IMR-90 (cell line): ENCODE measurements at regions of chr13 and their contacts with region 1.

Region 1: DNA sequence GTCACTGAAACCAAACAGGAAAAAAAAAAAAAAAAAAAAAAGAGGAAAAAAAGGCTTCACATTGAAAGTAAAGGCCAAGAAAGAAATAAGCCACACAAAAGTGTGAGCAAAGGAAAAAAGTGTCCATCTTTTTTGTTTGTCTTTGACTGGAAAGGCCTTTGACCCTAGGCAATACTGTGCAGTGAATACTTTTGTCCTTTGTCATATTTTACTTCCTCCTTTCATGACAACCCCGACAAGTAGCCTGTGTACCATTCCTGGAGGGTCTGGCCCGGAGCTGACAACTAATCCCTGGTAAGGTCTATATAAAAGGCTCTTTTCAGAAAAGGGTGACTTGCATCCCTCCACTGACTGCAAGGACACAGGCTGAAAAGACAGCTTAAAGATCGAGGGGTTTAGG is 12.9 kb upstream of the MICU2 start:
- DNase-seq: no peak
- ATAC-seq: no peak
- H3K4me3 ChIP-seq: no peak overlapping the region
- H3K27ac ChIP-seq: no peak overlapping the region
- H3K4me1 ChIP-seq: peaks cover 3% of the 10 kb centered on the region
- H3K27me3 ChIP-seq: peaks cover 16% of the 10 kb centered on the region
- CTCF ChIP-seq: no peak
- POLR2A ChIP-seq: no peak
- RAD21 ChIP-seq: no peak

Region 2: GRCh38 chr13:21033212-21033840 is 583.6 kb before region 1 on chr13:
- CTCF ChIA-PET with region 1: no interaction called
- POLR2A ChIA-PET with region 1: no interaction called
- dilution Hi-C with region 1: no loop called
- in situ Hi-C with region 1: no loop called
- intact Hi-C with region 1: no loop called
- DNase-seq: no peak
- ATAC-seq: peak; percentile 47
- H3K4me3 ChIP-seq: no peak overlapping the region
- H3K27ac ChIP-seq: peak overlapping the region; percentile 35; the same call in 1 of the 2 replicates
- H3K4me1 ChIP-seq: peaks cover 32% of the 10 kb centered on the region
- H3K27me3 ChIP-seq: no peaks in the 10 kb centered on the region
- CTCF ChIP-seq: no peak
- POLR2A ChIP-seq: no peak
- RAD21 ChIP-seq: no peak

Region 3: GRCh38 chr13:21528621-21529020 is 88.3 kb before region 1 on chr13:
- CTCF ChIA-PET with region 1: no interaction called
- POLR2A ChIA-PET with region 1: no interaction called
- dilution Hi-C with region 1: no loop called
- in situ Hi-C with region 1: no loop called
- intact Hi-C with region 1: no loop called
- DNase-seq: peak; percentile 63
- ATAC-seq: peak; percentile 85
- H3K4me3 ChIP-seq: no peak overlapping the region
- H3K27ac ChIP-seq: no peak overlapping the region
- H3K4me1 ChIP-seq: no peaks in the 10 kb centered on the region
- H3K27me3 ChIP-seq: no peaks in the 10 kb centered on the region
- CTCF ChIP-seq: no peak
- POLR2A ChIP-seq: no peak
- RAD21 ChIP-seq: no peak

Region 4: GRCh38 chr13:21595546-21595822 is 21.4 kb before region 1 on chr13:
- CTCF ChIA-PET with region 1: no interaction called
- POLR2A ChIA-PET with region 1: interaction called, 24 read pairs
- dilution Hi-C with region 1: no loop called
- in situ Hi-C with region 1: no loop called
- intact Hi-C with region 1: no loop called
- DNase-seq: no peak
- ATAC-seq: peak; percentile 53; the same call in 1 of the 2 replicates
- H3K4me3 ChIP-seq: no peak overlapping the region
- H3K27ac ChIP-seq: no peak overlapping the region
- H3K4me1 ChIP-seq: no peaks in the 10 kb centered on the region
- H3K27me3 ChIP-seq: no peaks in the 10 kb centered on the region
- CTCF ChIP-seq: no peak
- POLR2A ChIP-seq: no peak
- RAD21 ChIP-seq: no peak

Region 5: GRCh38 chr13:21934284-21934683 is 317.4 kb after region 1 on chr13:
- CTCF ChIA-PET with region 1: no interaction called
- POLR2A ChIA-PET with region 1: no interaction called
- dilution Hi-C with region 1: no loop called
- in situ Hi-C with region 1: no loop called
- intact Hi-C with region 1: no loop called
- DNase-seq: no peak
- ATAC-seq: no peak
- H3K4me3 ChIP-seq: no peak overlapping the region
- H3K27ac ChIP-seq: no peak overlapping the region
- H3K4me1 ChIP-seq: peaks cover 2% of the 10 kb centered on the region; the same call in 1 of the 2 replicates
- H3K27me3 ChIP-seq: peaks cover 4% of the 10 kb centered on the region
- CTCF ChIP-seq: no peak
- POLR2A ChIP-seq: no peak
- RAD21 ChIP-seq: no peak

Region 6: GRCh38 chr13:22073718-22074117 is 456.8 kb after region 1 on chr13:
- CTCF ChIA-PET with region 1: no interaction called
- POLR2A ChIA-PET with region 1: interaction called, 16 read pairs
- dilution Hi-C with region 1: no loop called
- in situ Hi-C with region 1: no loop called
- intact Hi-C with region 1: no loop called
- DNase-seq: no peak
- ATAC-seq: no peak
- H3K4me3 ChIP-seq: no peak overlapping the region
- H3K27ac ChIP-seq: no peak overlapping the region
- H3K4me1 ChIP-seq: peaks cover 3% of the 10 kb centered on the region; the same call in 1 of the 2 replicates
- H3K27me3 ChIP-seq: no peaks in the 10 kb centered on the region; the same call in none of the 2 replicates
- CTCF ChIP-seq: no peak
- POLR2A ChIP-seq: no peak
- RAD21 ChIP-seq: no peak

Region 7: GRCh38 chr13:22256111-22256639 is 639.3 kb after region 1 on chr13:
- CTCF ChIA-PET with region 1: no interaction called
- POLR2A ChIA-PET with region 1: interaction called, 14 read pairs
- dilution Hi-C with region 1: no loop called
- in situ Hi-C with region 1: no loop called
- intact Hi-C with region 1: no loop called
- DNase-seq: no peak
- ATAC-seq: no peak
- H3K4me3 ChIP-seq: no peak overlapping the region
- H3K27ac ChIP-seq: no peak overlapping the region
- H3K4me1 ChIP-seq: no peaks in the 10 kb centered on the region
- H3K27me3 ChIP-seq: peaks cover 3% of the 10 kb centered on the region; the same call in 1 of the 2 replicates
- CTCF ChIP-seq: no peak
- POLR2A ChIP-seq: no peak
- RAD21 ChIP-seq: no peak